ENCODE measurements at regions of chr5 and their contacts with region 1.

Region 1: GRCh38 chr5:167339205-167339604 is 952.2 kb upstream of the WWC1 start:
- DNase-seq: no peak
- H3K4me3 ChIP-seq: no peak overlapping the region
- H3K27ac ChIP-seq: no peak overlapping the region
- H3K4me1 ChIP-seq: no peaks in the 10 kb centered on the region
- H3K27me3 ChIP-seq: no peaks in the 10 kb centered on the region
- CTCF ChIP-seq: no peak
- EP300 ChIP-seq: no peak
- POLR2A ChIP-seq: no peak

Region 2: GRCh38 chr5:167304834-167305469 is 34.3 kb before region 1 on chr5:
- in situ Hi-C with region 1: no loop called
- intact Hi-C with region 1: loop called (anchors 1 kb)
- DNase-seq: no peak
- H3K4me3 ChIP-seq: no peak overlapping the region
- H3K27ac ChIP-seq: no peak overlapping the region
- H3K4me1 ChIP-seq: no peaks in the 10 kb centered on the region
- H3K27me3 ChIP-seq: no peaks in the 10 kb centered on the region
- CTCF ChIP-seq: no peak
- EP300 ChIP-seq: no peak
- POLR2A ChIP-seq: no peak

Region 3: GRCh38 chr5:167489202-167489601 is 150.0 kb after region 1 on chr5:
- in situ Hi-C with region 1: no loop called
- intact Hi-C with region 1: no loop called
- DNase-seq: no peak
- H3K4me3 ChIP-seq: no peak overlapping the region
- H3K27ac ChIP-seq: no peak overlapping the region
- H3K4me1 ChIP-seq: no peaks in the 10 kb centered on the region
- H3K27me3 ChIP-seq: no peaks in the 10 kb centered on the region
- CTCF ChIP-seq: no peak
- EP300 ChIP-seq: no peak
- POLR2A ChIP-seq: no peak

Region 4: GRCh38 chr5:167592114-167592513 is 252.9 kb after region 1 on chr5:
- in situ Hi-C with region 1: no loop called
- intact Hi-C with region 1: no loop called
- DNase-seq: no peak
- H3K4me3 ChIP-seq: no peak overlapping the region
- H3K27ac ChIP-seq: no peak overlapping the region
- H3K4me1 ChIP-seq: no peaks in the 10 kb centered on the region
- H3K27me3 ChIP-seq: no peaks in the 10 kb centered on the region
- CTCF ChIP-seq: no peak
- EP300 ChIP-seq: no peak
- POLR2A ChIP-seq: no peak

Region 5: DNA sequence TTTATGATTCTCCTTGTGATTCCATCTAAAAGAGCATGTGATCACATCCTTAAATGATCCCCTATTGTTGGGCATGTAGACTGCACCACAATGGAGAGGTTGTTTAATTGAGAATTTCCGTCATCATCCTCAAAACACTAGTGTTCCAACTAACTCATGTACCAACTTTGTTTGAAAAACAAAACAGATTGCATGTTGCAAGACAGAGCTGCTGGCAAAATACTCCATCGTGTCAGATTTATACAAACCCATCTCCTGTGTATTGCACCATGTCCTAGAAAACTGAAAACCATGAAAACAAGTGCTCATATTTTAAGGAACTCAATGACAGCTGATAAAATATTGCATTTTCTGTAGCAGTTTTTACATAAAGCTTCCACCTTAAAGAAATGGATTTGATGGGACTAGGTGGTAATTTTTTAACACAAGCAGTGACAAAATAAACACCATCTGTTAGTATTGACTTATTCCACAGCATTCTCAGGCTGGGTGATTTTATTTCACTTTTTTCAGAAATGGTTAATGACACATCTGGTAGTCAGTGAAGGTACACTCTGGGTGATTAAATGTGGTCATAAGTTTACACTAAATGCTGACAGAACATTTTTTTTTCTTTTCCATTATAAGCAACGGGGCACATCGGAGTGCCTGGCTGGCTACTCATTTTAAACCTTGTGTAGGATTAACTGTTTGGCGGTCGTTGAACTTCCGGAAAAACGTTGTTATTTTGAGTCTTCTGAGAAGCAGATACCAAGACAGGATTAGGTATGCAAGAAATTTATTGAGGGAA is 349.3 kb after region 1 on chr5:
- in situ Hi-C with region 1: no loop called
- intact Hi-C with region 1: no loop called
- DNase-seq: no peak
- H3K4me3 ChIP-seq: no peak overlapping the region
- H3K27ac ChIP-seq: no peak overlapping the region
- H3K4me1 ChIP-seq: no peaks in the 10 kb centered on the region
- H3K27me3 ChIP-seq: no peaks in the 10 kb centered on the region
- CTCF ChIP-seq: no peak
- EP300 ChIP-seq: no peak
- POLR2A ChIP-seq: no peak